Activated CD4-positive, alpha-beta memory T cell treated with anti-CD3 and anti-CD28 coated beads, Interleukin-2, amount 10 ng/mL, durations not matched to agents 7 days and 5 days (primary cell): ENCODE measurements at regions of chr22 and their contacts with region 1.

Region 1: GRCh38 chr22:50456466-50457234 is 18.2 kb downstream of the SBF1 start:
- DNase-seq: no peak
- H3K4me3 Mint-ChIP-seq: no peak overlapping the region
- H3K27ac Mint-ChIP-seq: no peak overlapping the region
- H3K4me1 Mint-ChIP-seq: peaks cover 6% of the 10 kb centered on the region
- H3K27me3 Mint-ChIP-seq: no peaks in the 10 kb centered on the region

Region 2: DNA sequence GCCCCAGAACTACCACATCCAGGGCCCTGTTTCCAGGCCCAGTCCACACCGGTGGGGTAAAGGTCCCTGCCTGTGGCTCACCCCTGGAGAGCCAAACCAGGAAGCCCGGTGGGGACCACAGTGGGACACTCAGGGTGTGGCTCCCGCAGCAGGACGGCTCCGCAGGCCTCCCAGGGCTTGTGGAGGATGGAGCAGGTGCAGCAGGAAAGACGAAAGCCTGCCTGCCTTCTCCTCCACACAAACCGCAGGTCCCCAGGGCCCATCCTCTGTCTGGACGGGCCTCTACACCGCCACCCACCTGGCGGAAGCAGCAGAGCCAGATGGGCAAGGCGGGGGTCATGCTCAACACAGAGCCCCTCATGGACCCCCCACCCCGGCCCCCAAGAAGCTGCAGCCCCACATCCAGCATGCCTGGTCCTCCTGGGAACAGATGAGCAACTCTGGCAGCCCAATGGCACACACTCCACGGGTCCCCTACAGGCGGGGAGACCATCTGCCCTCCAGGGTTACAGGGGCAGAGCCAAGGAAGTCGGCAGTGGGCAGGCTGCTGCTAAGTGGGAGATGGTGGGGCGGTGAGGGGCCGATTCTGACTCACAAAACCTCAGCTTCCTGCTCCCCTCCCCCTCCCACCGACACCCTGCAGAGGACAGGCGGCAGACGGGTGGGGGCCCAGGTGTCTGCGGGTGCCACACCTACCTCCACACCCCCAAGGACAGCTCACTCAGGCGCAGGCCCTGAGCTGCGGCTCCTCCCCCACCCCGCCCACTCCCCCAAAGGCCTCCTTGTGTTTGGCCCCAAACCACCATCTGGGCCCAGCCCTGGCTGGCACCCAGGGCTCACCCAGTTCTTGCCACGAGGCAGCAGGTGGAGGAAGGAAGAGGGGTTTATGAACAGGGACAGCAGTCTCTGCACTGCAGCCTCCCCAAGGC is 13.0 kb after region 1 on chr22:
- CTCF ChIA-PET with region 1: interaction called, 7 read pairs
- POLR2A ChIA-PET with region 1: interaction called, 22 read pairs
- DNase-seq: peak; percentile 99
- H3K4me3 Mint-ChIP-seq: peak overlapping the region; percentile 68
- H3K27ac Mint-ChIP-seq: peak overlapping the region; percentile 97
- H3K4me1 Mint-ChIP-seq: peaks cover 67% of the 10 kb centered on the region
- H3K27me3 Mint-ChIP-seq: no peaks in the 10 kb centered on the region

Region 3: GRCh38 chr22:50498322-50498890 is 41.8 kb after region 1 on chr22:
- CTCF ChIA-PET with region 1: interaction called, 12 read pairs
- POLR2A ChIA-PET with region 1: interaction called, 9 read pairs
- DNase-seq: peak; percentile 78
- H3K4me3 Mint-ChIP-seq: no peak overlapping the region
- H3K27ac Mint-ChIP-seq: no peak overlapping the region
- H3K4me1 Mint-ChIP-seq: peaks cover 2% of the 10 kb centered on the region
- H3K27me3 Mint-ChIP-seq: no peaks in the 10 kb centered on the region

Region 4: DNA sequence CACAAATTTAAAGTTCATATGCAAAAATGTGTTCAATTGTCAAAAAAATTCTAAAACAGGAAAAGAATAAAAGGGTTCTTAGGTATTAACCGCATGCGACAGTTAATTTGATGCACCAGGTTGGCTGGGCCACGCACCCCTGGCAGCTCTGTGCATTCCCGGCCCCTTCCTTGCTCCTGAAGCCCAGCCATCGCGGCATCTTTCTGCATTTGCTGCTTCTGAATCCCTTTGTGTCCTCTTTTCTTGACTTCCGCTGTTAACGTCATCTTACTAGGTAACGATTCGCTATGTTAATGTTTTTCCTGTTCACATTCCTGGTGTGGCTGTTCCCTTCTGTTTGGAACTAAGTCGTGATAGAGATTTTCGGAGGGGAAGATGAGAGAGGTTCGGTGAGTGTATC is 81.1 kb after region 1 on chr22:
- CTCF ChIA-PET with region 1: no interaction called
- POLR2A ChIA-PET with region 1: no interaction called
- DNase-seq: no peak
- H3K4me3 Mint-ChIP-seq: peak overlapping the region; percentile 33
- H3K27ac Mint-ChIP-seq: peak overlapping the region; percentile 99
- H3K4me1 Mint-ChIP-seq: peaks cover 83% of the 10 kb centered on the region
- H3K27me3 Mint-ChIP-seq: no peaks in the 10 kb centered on the region

Region 5: DNA sequence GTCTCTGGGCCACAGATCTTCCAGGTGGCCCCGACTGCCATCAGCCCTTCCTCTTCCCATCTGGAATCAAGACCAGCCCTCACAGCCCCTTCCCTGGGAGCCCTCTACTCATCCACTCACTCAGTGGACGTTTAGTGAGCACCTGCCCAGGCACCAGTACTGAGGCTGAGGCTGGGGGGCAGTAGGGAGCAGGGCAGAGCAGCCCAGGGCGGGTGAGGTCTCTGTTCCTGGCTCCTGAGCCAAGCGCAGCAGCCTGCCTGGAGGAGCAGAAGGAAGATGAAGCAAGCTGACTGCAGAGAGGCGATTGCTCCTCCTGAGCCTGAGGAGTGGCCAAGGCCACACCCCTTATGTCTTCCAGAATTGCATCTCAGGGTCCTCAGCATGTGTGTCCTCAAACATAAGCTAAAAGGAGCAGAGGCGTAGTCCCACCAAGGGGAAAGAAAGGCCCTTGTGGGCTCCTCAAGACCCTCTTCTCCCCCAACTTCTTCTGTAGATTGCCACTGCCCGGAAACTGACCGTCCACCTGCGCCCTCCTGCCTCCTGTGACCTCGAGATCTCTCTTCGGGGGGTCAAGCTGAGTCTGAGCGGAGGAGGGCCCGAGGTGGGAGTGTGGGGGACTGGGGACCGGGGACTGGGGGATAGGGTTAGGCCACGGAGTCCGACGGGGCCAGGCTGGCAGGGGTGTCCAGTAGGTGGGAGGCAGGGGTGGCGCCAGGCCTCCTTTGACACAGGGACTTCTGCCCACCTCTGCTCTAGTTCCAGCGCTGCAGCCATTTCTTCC is 149.7 kb after region 1 on chr22:
- CTCF ChIA-PET with region 1: no interaction called
- POLR2A ChIA-PET with region 1: no interaction called
- DNase-seq: no peak
- H3K4me3 Mint-ChIP-seq: no peak overlapping the region
- H3K27ac Mint-ChIP-seq: no peak overlapping the region
- H3K4me1 Mint-ChIP-seq: peaks cover 6% of the 10 kb centered on the region
- H3K27me3 Mint-ChIP-seq: peaks cover 44% of the 10 kb centered on the region